Prostate gland (tissue), 2 donors: ENCODE measurements at regions of chrX and their contacts with region 1.

Region 1: DNA sequence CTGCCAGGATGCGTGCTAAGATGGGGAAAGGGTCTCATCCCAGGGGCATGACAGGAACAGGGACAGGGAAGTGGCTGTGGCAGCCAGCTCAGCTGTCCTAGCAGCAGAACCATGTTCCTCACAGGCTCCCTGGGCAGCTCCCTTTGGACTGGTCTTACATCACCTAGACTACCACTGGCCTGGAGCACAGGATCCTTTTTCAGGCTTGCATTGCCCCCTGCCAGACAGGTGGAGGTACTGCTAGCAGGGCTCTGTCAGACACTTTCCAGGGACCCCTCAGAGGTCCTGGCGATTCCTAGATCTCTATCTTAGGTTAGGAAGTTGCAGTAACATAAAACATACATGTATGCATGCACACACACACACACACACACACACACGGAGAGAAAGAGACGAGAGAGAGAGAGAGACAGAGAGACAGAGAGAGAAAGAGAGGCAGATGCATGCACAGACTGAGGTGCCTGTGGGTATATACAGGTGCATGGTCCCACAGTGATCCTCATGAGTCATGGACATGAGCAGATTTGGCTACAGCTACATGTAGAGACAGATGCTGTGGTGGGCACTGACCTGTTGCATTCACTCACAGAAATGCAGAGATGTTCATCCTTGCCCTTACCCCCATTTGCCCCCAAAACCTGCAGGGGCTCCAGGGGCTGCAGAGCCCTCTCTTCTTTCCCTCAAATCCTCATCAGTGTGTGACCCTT is 63.6 kb downstream of the STARD8 start:
- DNase-seq: peak; percentile 8
- H3K4me3 ChIP-seq: no peak overlapping the region
- H3K27ac ChIP-seq: no peak overlapping the region
- H3K4me1 ChIP-seq: no peaks in the 10 kb centered on the region
- H3K27me3 ChIP-seq: no peaks in the 10 kb centered on the region
- CTCF ChIP-seq: peak in 3 of 4 experiments; percentile 15 to 63 (median 59)
- POLR2A ChIP-seq: no peak

Region 2: DNA sequence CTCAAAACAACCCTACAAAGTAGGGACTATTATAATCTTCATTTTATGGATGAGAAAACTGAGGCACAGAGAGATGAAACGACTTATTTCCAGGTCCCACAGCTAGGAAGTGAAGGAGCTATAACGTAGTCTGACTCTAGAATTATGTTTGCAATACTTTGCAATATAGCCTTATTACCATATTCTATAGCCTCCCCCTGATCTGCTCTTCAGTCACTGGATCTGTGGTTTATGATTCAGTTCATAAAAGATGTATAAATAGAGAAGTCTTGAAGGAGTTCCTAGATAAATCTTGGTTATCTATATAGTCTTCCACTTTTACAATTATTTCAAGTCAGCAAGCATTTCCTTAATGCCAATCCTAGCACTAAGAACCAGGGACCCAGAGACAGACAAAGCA is 335.2 kb before region 1 on chrX:
- intact Hi-C with region 1: no loop called
- DNase-seq: no peak
- H3K4me3 ChIP-seq: no peak overlapping the region
- H3K27ac ChIP-seq: no peak overlapping the region
- H3K4me1 ChIP-seq: no peaks in the 10 kb centered on the region
- H3K27me3 ChIP-seq: no peaks in the 10 kb centered on the region
- CTCF ChIP-seq: no peak
- POLR2A ChIP-seq: no peak

Region 3: GRCh38 chrX:68511255-68511654 is 199.8 kb before region 1 on chrX:
- intact Hi-C with region 1: loop called (anchors 2 kb)
- DNase-seq: peak; percentile 6
- H3K4me3 ChIP-seq: no peak overlapping the region
- H3K27ac ChIP-seq: no peak overlapping the region
- H3K4me1 ChIP-seq: no peaks in the 10 kb centered on the region
- H3K27me3 ChIP-seq: no peaks in the 10 kb centered on the region
- CTCF ChIP-seq: peak in 3 of 4 experiments; percentile 37 to 65 (median 55)
- POLR2A ChIP-seq: no peak